Sigmoid colon (tissue), 7 donors: ENCODE measurements at regions of chr11 and their contacts with region 1.

Region 1: GRCh38 chr11:19561011-19561410 is 151.6 kb upstream of the NAV2 start:
- DNase-seq: no peak
- H3K4me3 ChIP-seq: no peak overlapping the region
- H3K27ac ChIP-seq: no peak overlapping the region
- H3K4me1 ChIP-seq: peaks cover 0 to 33% (median 25%) of the 10 kb centered on the region in 4 donors
- H3K27me3 ChIP-seq: no peaks in the 10 kb centered on the region
- CTCF ChIP-seq: no peak
- EP300 ChIP-seq: no peak
- POLR2A ChIP-seq: no peak

Region 2: GRCh38 chr11:19673924-19674729 is 113.1 kb after region 1 on chr11:
- intact Hi-C with region 1: loop called (anchors 2 kb)
- DNase-seq: peak; percentile 97
- H3K4me3 ChIP-seq: no peak overlapping the region
- H3K27ac ChIP-seq: peak overlapping the region; percentile 86 to 93 (median 90)
- H3K4me1 ChIP-seq: peaks cover 3 to 95% (median 89%) of the 10 kb centered on the region in 4 donors
- H3K27me3 ChIP-seq: no peaks in the 10 kb centered on the region
- CTCF ChIP-seq: no peak
- EP300 ChIP-seq: peak in 3 of 4 donors; percentile 42 to 74 (median 69)
- POLR2A ChIP-seq: peak in 1 of 2 donors; percentile 46